Endothelial cell of umbilical vein (primary cell): ENCODE measurements at regions of chr5 and their contacts with region 1.

Region 1: DNA sequence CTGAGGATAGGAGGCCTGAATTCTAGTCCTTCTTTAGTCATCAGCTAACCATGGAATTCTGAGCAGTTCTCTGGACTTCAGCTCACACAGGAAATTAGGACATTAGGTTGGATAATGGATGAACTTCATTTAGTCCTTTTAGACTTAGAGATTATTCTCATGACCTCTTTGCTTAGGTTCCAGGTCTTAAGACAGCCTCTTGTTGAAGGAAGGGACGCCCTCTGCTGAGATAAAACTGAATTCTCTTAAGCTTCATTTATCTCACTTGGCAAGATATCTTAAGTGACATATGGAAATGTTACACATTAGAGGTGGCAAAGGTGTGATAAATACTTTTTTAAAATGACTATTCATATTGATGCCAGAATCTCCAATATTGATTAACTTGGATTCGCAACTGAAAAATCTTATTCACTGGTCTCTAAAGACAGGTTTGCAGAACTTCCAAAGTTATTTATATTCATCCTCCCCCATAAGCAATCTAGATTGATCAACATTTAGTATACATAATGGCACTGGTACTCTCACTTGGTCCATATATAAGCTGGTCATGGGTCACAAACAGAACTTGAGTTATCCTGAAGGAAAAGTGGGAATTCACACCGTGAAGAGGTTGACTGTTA is 16.9 kb upstream of the ZNF366 start:
- DNase-seq: peak; percentile 89
- H3K4me3 ChIP-seq: no peak overlapping the region
- H3K27ac ChIP-seq: peak overlapping the region; percentile 54
- H3K4me1 ChIP-seq: peaks cover 7% of the 10 kb centered on the region
- H3K27me3 ChIP-seq: no peaks in the 10 kb centered on the region
- CTCF ChIP-seq: peak; percentile 39 to 42
- POLR2A ChIP-seq: no peak

Region 2: DNA sequence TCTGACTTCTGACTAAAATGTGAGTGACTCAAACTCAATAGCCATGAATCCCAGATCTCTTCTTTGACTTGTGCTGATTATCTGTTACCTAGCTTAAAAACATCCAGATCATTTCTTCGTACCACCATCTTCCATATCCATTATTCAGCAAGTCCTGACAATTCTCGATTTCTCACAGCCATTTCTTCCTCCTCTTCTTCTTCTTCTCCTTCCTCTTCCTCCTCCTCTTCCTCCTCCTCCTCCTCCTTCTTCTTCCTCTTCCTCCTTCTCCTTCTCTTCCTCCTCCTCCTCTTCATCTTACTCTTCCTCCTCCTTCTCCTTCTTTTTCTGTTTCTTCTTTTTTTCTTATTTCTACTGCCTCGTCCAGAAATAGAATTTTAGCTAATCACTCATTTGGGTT is 493.8 kb before region 1 on chr5:
- CTCF ChIA-PET with region 1: no interaction called
- POLR2A ChIA-PET with region 1: no interaction called
- dilution Hi-C with region 1: no loop called
- intact Hi-C with region 1: no loop called
- DNase-seq: no peak
- H3K4me3 ChIP-seq: no peak overlapping the region
- H3K27ac ChIP-seq: no peak overlapping the region
- H3K4me1 ChIP-seq: no peaks in the 10 kb centered on the region
- H3K27me3 ChIP-seq: peaks cover 11 to 44% of the 10 kb centered on the region in 2 experiments
- CTCF ChIP-seq: no peak
- POLR2A ChIP-seq: no peak

Region 3: GRCh38 chr5:72224946-72225463 is 299.1 kb before region 1 on chr5:
- CTCF ChIA-PET with region 1: no interaction called
- POLR2A ChIA-PET with region 1: no interaction called
- dilution Hi-C with region 1: no loop called
- intact Hi-C with region 1: no loop called
- DNase-seq: no peak
- H3K4me3 ChIP-seq: no peak overlapping the region
- H3K27ac ChIP-seq: no peak overlapping the region
- H3K4me1 ChIP-seq: no peaks in the 10 kb centered on the region
- H3K27me3 ChIP-seq: no peaks in the 10 kb centered on the region
- CTCF ChIP-seq: no peak
- POLR2A ChIP-seq: no peak

Region 4: GRCh38 chr5:72355706-72356299 is 168.3 kb before region 1 on chr5:
- CTCF ChIA-PET with region 1: interaction called, 23 read pairs
- POLR2A ChIA-PET with region 1: no interaction called
- dilution Hi-C with region 1: no loop called
- intact Hi-C with region 1: loop called (anchors 1 kb)
- DNase-seq: peak; percentile 69
- H3K4me3 ChIP-seq: no peak overlapping the region
- H3K27ac ChIP-seq: no peak overlapping the region
- H3K4me1 ChIP-seq: peaks cover 7% of the 10 kb centered on the region
- H3K27me3 ChIP-seq: no peaks in the 10 kb centered on the region
- CTCF ChIP-seq: peak; percentile 54 to 57
- POLR2A ChIP-seq: no peak

Region 5: GRCh38 chr5:72387985-72388384 is 136.1 kb before region 1 on chr5:
- CTCF ChIA-PET with region 1: interaction called, 26 read pairs
- POLR2A ChIA-PET with region 1: no interaction called
- dilution Hi-C with region 1: no loop called
- intact Hi-C with region 1: no loop called
- DNase-seq: peak; percentile 90
- H3K4me3 ChIP-seq: no peak overlapping the region
- H3K27ac ChIP-seq: peak overlapping the region; percentile 97
- H3K4me1 ChIP-seq: peaks cover 43% of the 10 kb centered on the region
- H3K27me3 ChIP-seq: no peaks in the 10 kb centered on the region
- CTCF ChIP-seq: no peak
- POLR2A ChIP-seq: no peak

Region 6: DNA sequence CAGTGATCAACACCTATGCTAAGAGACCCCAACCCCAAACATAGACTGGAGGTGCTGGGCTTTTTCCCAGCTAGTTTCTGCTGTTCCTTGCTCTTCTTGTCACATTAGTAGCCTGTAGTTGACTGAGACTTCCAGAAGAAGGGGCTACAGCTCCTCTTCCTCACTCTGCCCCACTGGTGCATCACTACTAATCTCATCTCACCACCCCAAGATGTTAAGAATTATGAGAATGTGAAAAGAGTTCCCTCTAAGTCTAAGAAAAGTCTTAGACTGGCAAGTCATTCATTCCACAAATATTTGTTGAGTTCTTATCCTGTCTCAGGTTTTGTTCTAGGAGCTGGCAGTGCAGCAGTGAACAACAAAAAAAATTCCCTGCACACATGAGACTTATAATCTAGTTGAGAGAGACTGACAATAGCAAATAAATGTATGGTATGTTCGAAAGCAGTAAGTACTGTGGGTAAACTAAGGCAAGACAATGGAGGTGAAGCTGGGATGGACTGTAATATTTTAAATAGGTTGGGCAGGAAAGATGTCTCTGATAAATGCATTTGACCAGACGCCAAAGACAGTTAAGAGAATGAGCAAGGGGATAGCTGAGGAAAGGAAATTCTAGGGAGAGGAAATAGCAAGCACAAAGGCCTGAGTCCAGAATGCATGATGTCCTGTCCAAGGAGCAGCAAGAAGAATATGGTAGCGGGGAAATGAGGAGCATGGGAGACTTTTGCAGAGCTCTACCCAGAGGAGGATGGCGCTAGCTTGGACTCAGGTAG is 111.6 kb before region 1 on chr5:
- CTCF ChIA-PET with region 1: interaction called, 11 read pairs
- POLR2A ChIA-PET with region 1: no interaction called
- dilution Hi-C with region 1: no loop called
- intact Hi-C with region 1: no loop called
- DNase-seq: no peak
- H3K4me3 ChIP-seq: no peak overlapping the region
- H3K27ac ChIP-seq: no peak overlapping the region
- H3K4me1 ChIP-seq: no peaks in the 10 kb centered on the region
- H3K27me3 ChIP-seq: no peaks in the 10 kb centered on the region
- CTCF ChIP-seq: no peak
- POLR2A ChIP-seq: no peak

Region 7: GRCh38 chr5:72465601-72466563 is 58.2 kb before region 1 on chr5:
- CTCF ChIA-PET with region 1: interaction called, 20 read pairs
- POLR2A ChIA-PET with region 1: no interaction called
- dilution Hi-C with region 1: no loop called
- intact Hi-C with region 1: loop called (anchors 1 kb)
- DNase-seq: peak; percentile 23
- H3K4me3 ChIP-seq: no peak overlapping the region
- H3K27ac ChIP-seq: no peak overlapping the region
- H3K4me1 ChIP-seq: peaks cover 36% of the 10 kb centered on the region
- H3K27me3 ChIP-seq: no peaks in the 10 kb centered on the region
- CTCF ChIP-seq: no peak
- POLR2A ChIP-seq: no peak

Region 8: GRCh38 chr5:72556351-72557166 is 32.5 kb after region 1 on chr5:
- CTCF ChIA-PET with region 1: interaction called, 13 read pairs
- POLR2A ChIA-PET with region 1: no interaction called
- dilution Hi-C with region 1: no loop called
- intact Hi-C with region 1: no loop called
- DNase-seq: peak; percentile 85
- H3K4me3 ChIP-seq: peak overlapping the region in 1 of 3 experiments; percentile 4
- H3K27ac ChIP-seq: peak overlapping the region; percentile 97
- H3K4me1 ChIP-seq: peaks cover 83% of the 10 kb centered on the region
- H3K27me3 ChIP-seq: no peaks in the 10 kb centered on the region
- CTCF ChIP-seq: no peak
- POLR2A ChIP-seq: peak; percentile 92

Region 9: GRCh38 chr5:72649449-72649848 is 125.4 kb after region 1 on chr5:
- CTCF ChIA-PET with region 1: no interaction called
- POLR2A ChIA-PET with region 1: no interaction called
- dilution Hi-C with region 1: no loop called
- intact Hi-C with region 1: no loop called
- DNase-seq: no peak
- H3K4me3 ChIP-seq: no peak overlapping the region
- H3K27ac ChIP-seq: no peak overlapping the region
- H3K4me1 ChIP-seq: no peaks in the 10 kb centered on the region
- H3K27me3 ChIP-seq: no peaks in the 10 kb centered on the region
- CTCF ChIP-seq: no peak
- POLR2A ChIP-seq: no peak

Region 10: DNA sequence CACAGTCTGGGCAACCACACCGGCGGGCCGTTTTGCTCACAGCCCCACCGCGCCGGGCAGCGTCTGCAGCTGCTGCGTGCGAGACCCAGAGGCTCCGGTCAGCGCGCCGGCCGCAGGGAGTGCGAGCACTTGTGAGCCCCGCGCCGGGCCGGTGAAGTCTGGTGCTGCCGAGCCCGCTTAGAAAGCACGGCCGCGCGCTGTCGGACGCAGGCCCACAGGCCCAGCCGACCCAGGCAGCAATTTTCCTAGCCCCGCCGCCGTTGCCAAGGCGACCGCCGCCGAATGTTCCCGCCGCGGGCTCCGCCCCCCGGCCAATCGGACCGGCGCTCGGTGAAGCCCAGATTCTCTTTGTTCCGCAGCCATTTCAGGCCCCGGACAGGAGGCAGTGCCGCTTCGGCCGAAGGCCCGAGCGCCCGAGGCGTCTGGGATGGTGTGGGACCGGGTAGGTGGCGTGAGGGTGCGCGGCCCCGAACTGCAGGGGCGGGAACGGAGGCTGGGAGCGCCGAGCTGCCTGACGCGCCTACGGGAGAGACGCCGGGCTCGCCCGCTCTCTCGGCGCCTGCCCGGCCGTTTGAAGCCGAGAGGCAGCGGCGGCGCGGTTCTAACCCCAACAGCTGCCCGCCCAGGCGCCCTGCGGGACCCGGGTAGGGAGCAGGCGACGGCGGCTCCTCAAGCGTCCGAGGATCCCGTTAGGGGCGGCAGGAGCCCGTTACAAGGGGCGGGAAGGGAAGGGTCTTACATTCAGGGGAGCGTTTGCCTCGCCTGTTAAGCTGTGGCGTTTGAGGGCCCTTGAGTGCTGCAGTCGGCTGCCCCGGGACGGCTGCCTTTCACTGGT is 292.5 kb after region 1 on chr5 and contains the start of gene TNPO1:
- CTCF ChIA-PET with region 1: interaction called, 16 read pairs
- POLR2A ChIA-PET with region 1: no interaction called
- dilution Hi-C with region 1: no loop called
- intact Hi-C with region 1: loop called (anchors 10 kb)
- DNase-seq: peak; percentile 96
- H3K4me3 ChIP-seq: peak within 1 kb of the TSS; percentile 92 to 100 (median 100)
- H3K27ac ChIP-seq: peak within 1 kb of the TSS; percentile 98
- H3K4me1 ChIP-seq: peaks cover 43% of the 10 kb centered on the region
- H3K27me3 ChIP-seq: no peaks in the 10 kb centered on the region
- CTCF ChIP-seq: no peak
- POLR2A ChIP-seq: peak; percentile 99
- total RNA-seq, gene TNPO1: 242 and 298 TPM in 2 replicates